ENCODE measurements at regions of chr9 and their contacts with region 1.

Region 1: DNA sequence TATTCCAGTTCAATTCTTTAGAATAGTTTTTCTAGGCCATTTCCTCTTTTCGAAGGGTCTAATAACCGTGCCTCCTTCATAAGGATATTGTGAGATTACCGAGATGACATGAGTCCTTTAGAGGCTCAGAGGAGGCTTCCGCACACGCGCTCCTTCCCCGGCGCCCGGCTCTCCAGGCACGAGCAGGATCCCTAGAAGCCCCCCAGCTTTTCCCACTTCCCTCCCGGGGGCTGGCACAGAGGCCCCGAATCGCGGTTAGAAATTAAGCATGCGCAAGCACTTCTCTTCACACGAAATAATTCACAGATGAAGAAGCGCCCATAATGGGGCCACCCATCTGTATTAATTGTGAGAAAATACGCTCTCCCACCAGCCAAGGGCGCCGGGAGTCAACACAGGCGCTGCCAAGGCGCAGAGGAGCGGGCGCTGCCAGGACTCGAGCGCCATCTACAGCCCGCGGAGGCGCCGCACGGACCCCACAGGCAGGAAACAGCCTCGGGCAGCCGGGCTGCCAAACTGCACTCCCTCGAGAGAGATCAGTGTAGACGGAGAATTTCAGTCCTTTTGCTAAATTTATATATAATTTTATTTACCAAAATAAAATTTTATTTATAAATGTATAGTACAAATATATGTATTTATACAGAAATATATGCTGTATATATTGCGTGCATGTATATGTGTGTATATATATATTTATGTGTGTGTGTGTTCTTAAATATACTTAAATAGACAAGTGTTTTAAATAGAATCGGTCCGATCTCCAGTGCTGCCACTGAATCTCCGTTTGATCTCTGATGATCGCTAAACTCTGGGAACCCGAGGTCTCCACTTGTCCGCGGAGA is 258.1 kb upstream of the NFIL3 start:
- DNase-seq: no peak
- H3K4me3 ChIP-seq: no peak overlapping the region
- CTCF ChIP-seq: peak; percentile 96

Region 2: GRCh38 chr9:91659529-91660495 is 21.9 kb before region 1 on chr9:
- CTCF ChIA-PET with region 1: interaction called, 11 read pairs
- POLR2A ChIA-PET with region 1: no interaction called
- DNase-seq: no peak
- H3K4me3 ChIP-seq: no peak overlapping the region
- CTCF ChIP-seq: peak; percentile 82